ENCODE measurements at regions of chr2 and their contacts with region 1.

Region 1: DNA sequence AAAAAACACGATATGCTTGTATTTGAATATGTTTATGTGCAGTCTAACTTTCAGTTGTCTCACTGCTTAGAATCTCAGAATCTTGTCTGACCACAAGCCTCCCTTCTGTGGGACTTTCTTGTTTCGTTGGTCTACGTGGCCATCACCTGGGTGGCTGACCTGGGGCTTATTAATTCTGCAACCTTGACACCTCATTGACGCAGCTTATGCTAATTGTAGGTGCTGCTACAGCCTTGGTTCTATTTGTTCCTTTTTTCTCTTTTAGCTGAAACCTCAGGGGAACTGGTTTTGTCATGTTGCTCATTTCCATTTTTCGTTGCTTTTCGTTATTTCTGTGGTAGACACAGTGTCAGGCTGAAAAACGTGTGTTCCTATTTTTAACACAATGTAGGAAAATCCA is 273.7 kb downstream of the SLC4A3 start:
- DNase-seq: no peak
- ATAC-seq: no peak
- H3K4me3 ChIP-seq: no peak overlapping the region
- H3K27ac ChIP-seq: no peak overlapping the region
- H3K4me1 ChIP-seq: no peaks in the 10 kb centered on the region
- H3K27me3 ChIP-seq: peaks cover 6% of the 10 kb centered on the region
- CTCF ChIP-seq: no peak
- POLR2A ChIP-seq: no peak
- RAD21 ChIP-seq: no peak

Region 2: GRCh38 chr2:219661197-219661954 is 239.8 kb before region 1 on chr2:
- CTCF ChIA-PET with region 1: no interaction called
- POLR2A ChIA-PET with region 1: no interaction called
- dilution Hi-C with region 1: no loop called
- in situ Hi-C with region 1: no loop called
- intact Hi-C with region 1: no loop called
- DNase-seq: peak; percentile 45
- ATAC-seq: peak; percentile 76
- H3K4me3 ChIP-seq: no peak overlapping the region
- H3K27ac ChIP-seq: no peak overlapping the region
- H3K4me1 ChIP-seq: peaks cover 4% of the 10 kb centered on the region; the same call in 1 of the 2 replicates
- H3K27me3 ChIP-seq: peaks cover 6% of the 10 kb centered on the region
- CTCF ChIP-seq: no peak
- POLR2A ChIP-seq: no peak
- RAD21 ChIP-seq: no peak

Region 3: GRCh38 chr2:219856602-219857001 is 44.6 kb before region 1 on chr2:
- CTCF ChIA-PET with region 1: no interaction called
- POLR2A ChIA-PET with region 1: no interaction called
- dilution Hi-C with region 1: no loop called
- in situ Hi-C with region 1: no loop called
- intact Hi-C with region 1: no loop called
- DNase-seq: no peak
- ATAC-seq: no peak
- H3K4me3 ChIP-seq: no peak overlapping the region
- H3K27ac ChIP-seq: no peak overlapping the region
- H3K4me1 ChIP-seq: peaks cover 4% of the 10 kb centered on the region; the same call in 1 of the 2 replicates
- H3K27me3 ChIP-seq: peaks cover 18% of the 10 kb centered on the region
- CTCF ChIP-seq: no peak
- POLR2A ChIP-seq: no peak
- RAD21 ChIP-seq: no peak

Region 4: GRCh38 chr2:219887870-219888269 is 13.3 kb before region 1 on chr2:
- CTCF ChIA-PET with region 1: no interaction called
- POLR2A ChIA-PET with region 1: no interaction called
- dilution Hi-C with region 1: no loop called
- in situ Hi-C with region 1: no loop called
- intact Hi-C with region 1: loop called (anchors 1 kb)
- DNase-seq: no peak
- ATAC-seq: no peak
- H3K4me3 ChIP-seq: no peak overlapping the region
- H3K27ac ChIP-seq: no peak overlapping the region
- H3K4me1 ChIP-seq: no peaks in the 10 kb centered on the region
- H3K27me3 ChIP-seq: no peaks in the 10 kb centered on the region
- CTCF ChIP-seq: no peak
- POLR2A ChIP-seq: no peak
- RAD21 ChIP-seq: no peak

Measured in IMR-90 (cell line).